HEK293T (cell line): ENCODE measurements at regions of chr2 and their contacts with region 1.

Region 1: DNA sequence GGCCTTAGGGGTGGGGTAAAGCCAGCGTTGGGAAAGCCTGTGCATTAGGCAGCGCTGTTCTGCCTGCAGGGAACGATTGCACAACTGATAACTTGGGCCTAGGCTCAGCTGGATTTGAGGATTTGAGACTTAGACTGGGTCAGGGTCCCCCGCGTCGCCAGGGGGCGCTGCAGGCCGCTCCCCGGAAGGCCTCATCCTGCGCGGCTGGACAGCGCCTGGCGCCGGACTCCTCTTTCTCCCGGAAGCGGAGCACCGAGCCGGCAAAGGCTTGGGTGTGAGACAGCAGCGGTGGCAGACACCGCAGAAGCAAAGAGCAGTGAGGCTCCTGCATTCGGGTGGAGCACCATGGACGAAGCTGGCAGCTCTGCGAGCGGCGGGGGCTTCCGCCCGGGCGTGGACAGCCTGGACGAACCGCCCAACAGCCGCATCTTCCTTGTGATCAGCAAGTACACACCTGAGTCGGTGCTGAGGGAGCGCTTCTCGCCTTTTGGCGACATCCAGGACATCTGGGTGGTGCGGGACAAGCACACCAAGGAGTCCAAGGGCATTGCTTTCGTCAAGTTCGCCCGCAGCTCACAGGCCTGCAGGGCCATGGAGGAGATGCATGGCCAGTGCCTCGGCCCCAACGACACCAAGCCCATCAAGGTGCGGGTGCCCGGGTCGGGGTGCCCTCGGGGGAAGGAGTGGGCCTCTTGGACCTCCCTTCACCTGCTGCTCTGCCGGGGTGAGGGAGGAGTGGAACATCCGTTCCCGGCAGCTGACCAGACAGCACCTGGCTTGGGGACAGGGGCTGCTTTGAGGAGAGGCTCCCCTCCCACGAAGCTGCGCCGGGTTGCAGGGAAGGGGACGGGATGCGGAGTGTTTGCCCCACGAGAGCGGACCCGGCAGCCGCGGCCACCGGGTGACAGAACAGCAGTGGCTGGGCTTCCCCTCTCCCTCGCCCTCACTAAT is at the start of gene RBM45:
- DNase-seq: peak; percentile 92

Region 2: GRCh38 chr2:177970670-177971454 is 141.6 kb before region 1 on chr2:
- CTCF ChIA-PET with region 1: no interaction called
- POLR2A ChIA-PET with region 1: no interaction called
- DNase-seq: no peak

Region 3: GRCh38 chr2:178125125-178125524 is 12.6 kb after region 1 on chr2:
- CTCF ChIA-PET with region 1: interaction called, 12 read pairs
- POLR2A ChIA-PET with region 1: interaction called, 3 read pairs
- DNase-seq: no peak

Region 4: GRCh38 chr2:178152033-178152432 is 39.6 kb after region 1 on chr2:
- CTCF ChIA-PET with region 1: no interaction called
- POLR2A ChIA-PET with region 1: no interaction called
- DNase-seq: no peak

Region 5: GRCh38 chr2:178173662-178174061 is 61.2 kb after region 1 on chr2:
- CTCF ChIA-PET with region 1: no interaction called
- POLR2A ChIA-PET with region 1: no interaction called
- DNase-seq: no peak